PC-3 (cell line): ENCODE measurements at regions of chr1 and their contacts with region 1.

Region 1: DNA sequence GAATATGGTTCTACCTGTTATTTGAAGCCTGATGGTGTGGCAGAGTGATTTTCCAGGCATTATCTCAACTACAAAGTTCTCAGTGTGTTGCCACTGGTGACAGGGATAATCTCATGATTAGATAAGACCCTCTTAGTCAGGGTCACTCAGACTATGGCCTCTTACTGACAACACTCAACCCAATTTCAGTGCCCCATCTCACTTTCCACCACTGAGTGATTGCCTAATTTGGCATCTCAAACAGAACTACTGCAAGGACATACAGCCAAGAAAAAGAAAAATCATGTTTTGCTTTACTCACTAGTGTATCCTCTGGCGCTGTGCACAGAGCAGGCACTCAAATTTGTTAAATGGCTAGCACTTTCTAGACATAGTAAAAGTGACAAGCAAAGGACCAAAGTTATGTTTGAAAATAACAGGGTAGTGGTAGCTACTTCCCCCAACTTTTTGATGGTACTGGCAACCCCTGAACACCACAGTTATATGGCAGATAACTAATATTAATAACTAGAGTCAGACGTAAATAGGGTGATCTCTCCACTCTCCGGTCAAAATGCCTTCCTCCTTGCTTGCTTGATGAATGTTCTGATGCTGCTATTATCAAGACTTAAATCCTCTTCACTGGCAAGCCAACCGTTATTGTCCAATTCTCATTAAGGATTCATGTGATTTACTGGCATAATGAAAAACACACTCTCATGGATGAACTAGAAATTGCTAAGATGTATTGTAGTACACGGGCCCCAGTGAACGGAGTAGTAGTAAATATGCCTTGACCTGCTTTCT is 37.1 kb upstream of the SLC30A10 start:
- DNase-seq: no peak
- ATAC-seq: no peak; the same call in 1 of the 2 replicates
- H3K4me3 ChIP-seq: no peak overlapping the region
- H3K27ac ChIP-seq: no peak overlapping the region
- H3K4me1 ChIP-seq: no peaks in the 10 kb centered on the region
- H3K27me3 ChIP-seq: no peaks in the 10 kb centered on the region
- CTCF ChIP-seq: no peak

Region 2: GRCh38 chr1:219837274-219837993 is 128.0 kb before region 1 on chr1:
- CTCF ChIA-PET with region 1: no interaction called
- POLR2A ChIA-PET with region 1: no interaction called
- intact Hi-C with region 1: loop called (anchors 5 kb)
- DNase-seq: peak; percentile 91
- ATAC-seq: peak; percentile 92
- H3K4me3 ChIP-seq: no peak overlapping the region
- H3K27ac ChIP-seq: no peak overlapping the region
- H3K4me1 ChIP-seq: no peaks in the 10 kb centered on the region
- H3K27me3 ChIP-seq: peaks cover 53% of the 10 kb centered on the region
- CTCF ChIP-seq: peak; percentile 99

Region 3: DNA sequence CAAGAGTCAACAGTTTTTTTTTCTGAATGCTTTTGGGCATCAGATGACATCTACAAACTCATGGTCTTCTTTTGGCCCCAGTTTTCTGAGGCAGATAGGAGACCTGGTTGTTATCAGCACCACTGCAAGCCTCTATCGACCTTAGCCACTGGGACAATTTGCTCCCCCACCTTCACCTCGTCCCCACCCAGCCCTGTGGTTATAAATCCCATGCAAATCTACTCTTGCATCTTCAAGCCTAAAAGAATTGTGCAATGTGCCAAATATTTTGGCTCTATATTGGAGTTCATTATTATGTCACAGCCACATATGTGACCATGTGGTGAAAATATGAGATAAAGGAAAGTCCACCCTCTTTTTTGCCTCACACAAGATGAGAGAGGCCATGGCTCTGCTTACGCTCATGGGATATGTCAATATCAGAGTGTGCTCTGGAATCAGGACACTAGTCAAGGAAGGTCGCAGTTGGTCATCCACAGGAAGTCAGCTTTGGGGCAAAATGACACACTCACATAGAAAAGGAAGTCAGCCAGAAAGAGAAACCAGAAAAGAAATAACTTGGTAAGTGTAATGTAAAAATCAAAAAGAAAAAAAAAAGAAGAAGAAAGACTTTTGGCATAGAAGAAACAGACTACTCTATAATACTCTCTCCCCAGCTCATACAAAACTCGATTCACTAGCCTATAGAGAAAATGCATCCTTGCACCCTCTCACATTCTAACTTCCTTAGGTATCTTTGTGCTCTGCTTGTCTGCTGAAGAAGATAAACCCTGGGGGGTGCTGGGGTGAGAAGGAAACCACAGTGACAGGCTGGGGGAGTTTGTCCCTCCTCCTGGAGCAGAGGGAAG is 58.3 kb before region 1 on chr1:
- CTCF ChIA-PET with region 1: no interaction called
- POLR2A ChIA-PET with region 1: no interaction called
- intact Hi-C with region 1: no loop called
- DNase-seq: no peak
- ATAC-seq: no peak
- H3K4me3 ChIP-seq: no peak overlapping the region
- H3K27ac ChIP-seq: no peak overlapping the region
- H3K4me1 ChIP-seq: peaks cover 9% of the 10 kb centered on the region; the same call in 1 of the 2 replicates
- H3K27me3 ChIP-seq: peaks cover 9% of the 10 kb centered on the region; the same call in 1 of the 2 replicates
- CTCF ChIP-seq: no peak

Region 4: DNA sequence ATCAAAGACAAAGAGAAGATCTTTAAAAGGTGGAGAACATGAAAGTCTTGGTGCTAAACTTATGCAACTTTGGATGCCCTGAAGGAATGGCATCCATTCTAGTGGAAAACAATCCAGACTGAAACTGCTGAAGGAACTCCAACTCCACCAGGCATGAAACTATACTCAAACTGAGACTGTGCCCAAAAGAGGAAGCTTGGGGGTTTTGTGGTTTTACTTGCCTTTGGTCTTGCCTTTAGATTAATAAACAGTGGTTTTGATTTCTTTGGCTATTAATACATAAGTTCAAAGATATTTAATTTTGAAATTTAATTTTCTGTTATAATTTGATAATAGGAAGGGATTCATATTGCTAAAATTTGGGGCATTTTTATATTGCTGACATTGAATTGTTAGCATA is 19.7 kb before region 1 on chr1:
- CTCF ChIA-PET with region 1: no interaction called
- POLR2A ChIA-PET with region 1: no interaction called
- intact Hi-C with region 1: no loop called
- DNase-seq: no peak
- ATAC-seq: no peak
- H3K4me3 ChIP-seq: no peak overlapping the region
- H3K27ac ChIP-seq: no peak overlapping the region
- H3K4me1 ChIP-seq: no peaks in the 10 kb centered on the region
- H3K27me3 ChIP-seq: peaks cover 36% of the 10 kb centered on the region
- CTCF ChIP-seq: no peak

Region 5: GRCh38 chr1:220028346-220028895 is 62.9 kb after region 1 on chr1:
- CTCF ChIA-PET with region 1: no interaction called
- POLR2A ChIA-PET with region 1: no interaction called
- intact Hi-C with region 1: no loop called
- DNase-seq: no peak
- ATAC-seq: no peak
- H3K4me3 ChIP-seq: no peak overlapping the region
- H3K27ac ChIP-seq: no peak overlapping the region
- H3K4me1 ChIP-seq: no peaks in the 10 kb centered on the region
- H3K27me3 ChIP-seq: no peaks in the 10 kb centered on the region
- CTCF ChIP-seq: no peak